CD14-positive monocyte (primary cell): ENCODE measurements at regions of chr19 and their contacts with region 1.

Region 1: GRCh38 chr19:35269421-35270117 is 807 bp downstream of the USF2 start:
- DNase-seq: peak; percentile 74 to 89 (median 85)
- H3K4me3 ChIP-seq: peak overlapping the region in 2 of 3 experiments; percentile 45 to 74
- H3K4me3 Mint-ChIP-seq: peak overlapping the region; percentile 71 to 76
- H3K27ac ChIP-seq: peak overlapping the region in 1 of 2 donors; percentile 74
- H3K27ac Mint-ChIP-seq: peak overlapping the region in 4 of 7 donors; percentile 48 to 78 (median 69)
- H3K4me1 ChIP-seq: peaks cover 65 to 77% of the 10 kb centered on the region in 2 donors
- H3K4me1 Mint-ChIP-seq: peaks cover 64% of the 10 kb centered on the region
- H3K27me3 ChIP-seq: no peaks in the 10 kb centered on the region
- H3K27me3 Mint-ChIP-seq: peaks cover 0 to 5% (median 3%) of the 10 kb centered on the region in 3 donors
- CTCF ChIP-seq: peak; percentile 96

Region 2: GRCh38 chr19:34943861-34944573 is 325.6 kb before region 1 on chr19:
- intact Hi-C with region 1: no loop called
- DNase-seq: no peak
- H3K4me3 ChIP-seq: no peak overlapping the region
- H3K4me3 Mint-ChIP-seq: no peak overlapping the region
- H3K27ac ChIP-seq: no peak overlapping the region
- H3K27ac Mint-ChIP-seq: no peak overlapping the region
- H3K4me1 ChIP-seq: no peaks in the 10 kb centered on the region
- H3K4me1 Mint-ChIP-seq: no peaks in the 10 kb centered on the region
- H3K27me3 ChIP-seq: no peaks in the 10 kb centered on the region
- H3K27me3 Mint-ChIP-seq: peaks cover 0 to 2% (median 0%) of the 10 kb centered on the region in 3 donors
- CTCF ChIP-seq: no peak

Region 3: GRCh38 chr19:35204799-35205732 is 64.5 kb before region 1 on chr19:
- intact Hi-C with region 1: loop called in 1 of 2 experiments (anchors 10 kb)
- DNase-seq: peak; percentile 79 to 83 (median 82)
- H3K4me3 ChIP-seq: peak overlapping the region in 1 of 3 experiments; percentile 14
- H3K4me3 Mint-ChIP-seq: peak overlapping the region in 1 of 2 donors; percentile 4
- H3K27ac ChIP-seq: peak overlapping the region; percentile 54 to 84
- H3K27ac Mint-ChIP-seq: peak overlapping the region; percentile 89 to 96 (median 93)
- H3K4me1 ChIP-seq: peaks cover 31 to 33% of the 10 kb centered on the region in 2 donors
- H3K4me1 Mint-ChIP-seq: peaks cover 42% of the 10 kb centered on the region
- H3K27me3 ChIP-seq: no peaks in the 10 kb centered on the region
- H3K27me3 Mint-ChIP-seq: peaks cover 0 to 1% (median 0%) of the 10 kb centered on the region in 3 donors
- CTCF ChIP-seq: no peak

Region 4: GRCh38 chr19:35279985-35280821 is 10.6 kb after region 1 on chr19:
- intact Hi-C with region 1: loop called in 1 of 2 experiments (anchors 1 kb)
- DNase-seq: no peak
- H3K4me3 ChIP-seq: no peak overlapping the region
- H3K4me3 Mint-ChIP-seq: no peak overlapping the region
- H3K27ac ChIP-seq: no peak overlapping the region
- H3K27ac Mint-ChIP-seq: peak overlapping the region in 3 of 7 donors; percentile 2 to 61 (median 32)
- H3K4me1 ChIP-seq: peaks cover 31 to 42% of the 10 kb centered on the region in 2 donors
- H3K4me1 Mint-ChIP-seq: peaks cover 42% of the 10 kb centered on the region
- H3K27me3 ChIP-seq: no peaks in the 10 kb centered on the region
- H3K27me3 Mint-ChIP-seq: peaks cover 13 to 16% (median 14%) of the 10 kb centered on the region in 3 donors
- CTCF ChIP-seq: no peak

Region 5: GRCh38 chr19:35318650-35319448 is 49.3 kb after region 1 on chr19:
- intact Hi-C with region 1: loop called in 1 of 2 experiments (anchors 5 kb)
- DNase-seq: peak; percentile 97 to 99 (median 97)
- H3K4me3 ChIP-seq: no peak overlapping the region
- H3K4me3 Mint-ChIP-seq: peak overlapping the region; percentile 20 to 67
- H3K27ac ChIP-seq: peak overlapping the region; percentile 83 to 90
- H3K27ac Mint-ChIP-seq: peak overlapping the region; percentile 87 to 99 (median 98)
- H3K4me1 ChIP-seq: peaks cover 65 to 74% of the 10 kb centered on the region in 2 donors
- H3K4me1 Mint-ChIP-seq: peaks cover 65% of the 10 kb centered on the region
- H3K27me3 ChIP-seq: no peaks in the 10 kb centered on the region
- H3K27me3 Mint-ChIP-seq: peaks cover 0 to 5% (median 2%) of the 10 kb centered on the region in 3 donors
- CTCF ChIP-seq: no peak

Region 6: DNA sequence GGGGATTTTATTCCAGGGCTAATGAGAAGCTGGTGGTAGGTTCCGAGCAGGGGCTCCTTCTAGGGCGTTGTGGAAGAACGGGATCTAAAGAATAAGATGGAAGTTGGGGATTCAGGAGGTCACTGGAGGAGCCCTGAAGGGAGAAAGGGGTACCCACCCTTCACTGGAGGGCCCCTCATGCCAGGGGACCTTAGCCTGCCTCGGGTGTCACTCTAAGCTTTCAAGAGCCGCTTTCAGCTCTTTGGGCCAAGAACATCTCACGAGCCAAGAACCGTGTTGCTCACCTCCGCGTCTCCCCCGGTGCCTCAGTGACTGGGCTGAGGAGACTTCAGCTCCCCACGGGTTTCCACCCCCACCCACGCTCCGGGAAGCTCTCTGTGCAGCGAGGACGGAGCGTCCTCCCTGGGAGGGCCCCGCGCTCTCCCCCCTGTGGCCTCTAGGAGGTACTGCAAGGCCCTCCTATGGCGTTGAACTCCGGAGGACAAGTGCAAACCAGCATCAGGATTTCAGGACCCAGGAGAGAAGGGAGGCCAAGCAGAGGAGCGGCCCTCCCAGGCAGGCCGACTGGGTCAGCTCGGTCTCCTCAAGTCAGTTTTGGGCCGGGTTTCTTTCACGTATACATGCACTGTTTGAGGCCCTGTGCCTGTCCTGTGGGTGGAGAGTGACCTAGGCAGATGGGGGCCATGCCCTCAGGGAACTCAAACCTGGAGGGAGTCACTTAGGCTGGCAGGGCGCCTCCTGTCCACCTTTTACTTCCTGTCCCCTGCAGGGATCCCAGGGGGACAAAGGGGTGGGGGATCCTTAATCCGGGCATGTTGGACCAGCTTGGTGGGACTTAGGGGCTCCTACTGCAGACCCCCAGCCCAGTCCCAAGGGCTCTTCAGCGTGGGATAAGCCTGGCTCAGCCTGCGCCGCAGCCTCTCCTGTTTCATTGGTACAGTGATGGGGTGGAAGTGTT is 225.8 kb after region 1 on chr19:
- intact Hi-C with region 1: loop called (anchors 5 kb)
- DNase-seq: peak; percentile 60 to 76 (median 68)
- H3K4me3 ChIP-seq: no peak overlapping the region
- H3K4me3 Mint-ChIP-seq: peak overlapping the region in 1 of 2 donors; percentile 40
- H3K27ac ChIP-seq: no peak overlapping the region
- H3K27ac Mint-ChIP-seq: peak overlapping the region in 2 of 7 donors; percentile 51 to 62
- H3K4me1 ChIP-seq: peaks cover 0 to 5% of the 10 kb centered on the region in 2 donors
- H3K4me1 Mint-ChIP-seq: peaks cover 7% of the 10 kb centered on the region
- H3K27me3 ChIP-seq: no peaks in the 10 kb centered on the region
- H3K27me3 Mint-ChIP-seq: peaks cover 11 to 19% (median 16%) of the 10 kb centered on the region in 3 donors
- CTCF ChIP-seq: peak; percentile 99